Caco-2 (cell line): ENCODE measurements at regions of chr19 and their contacts with region 1.

Region 1: DNA sequence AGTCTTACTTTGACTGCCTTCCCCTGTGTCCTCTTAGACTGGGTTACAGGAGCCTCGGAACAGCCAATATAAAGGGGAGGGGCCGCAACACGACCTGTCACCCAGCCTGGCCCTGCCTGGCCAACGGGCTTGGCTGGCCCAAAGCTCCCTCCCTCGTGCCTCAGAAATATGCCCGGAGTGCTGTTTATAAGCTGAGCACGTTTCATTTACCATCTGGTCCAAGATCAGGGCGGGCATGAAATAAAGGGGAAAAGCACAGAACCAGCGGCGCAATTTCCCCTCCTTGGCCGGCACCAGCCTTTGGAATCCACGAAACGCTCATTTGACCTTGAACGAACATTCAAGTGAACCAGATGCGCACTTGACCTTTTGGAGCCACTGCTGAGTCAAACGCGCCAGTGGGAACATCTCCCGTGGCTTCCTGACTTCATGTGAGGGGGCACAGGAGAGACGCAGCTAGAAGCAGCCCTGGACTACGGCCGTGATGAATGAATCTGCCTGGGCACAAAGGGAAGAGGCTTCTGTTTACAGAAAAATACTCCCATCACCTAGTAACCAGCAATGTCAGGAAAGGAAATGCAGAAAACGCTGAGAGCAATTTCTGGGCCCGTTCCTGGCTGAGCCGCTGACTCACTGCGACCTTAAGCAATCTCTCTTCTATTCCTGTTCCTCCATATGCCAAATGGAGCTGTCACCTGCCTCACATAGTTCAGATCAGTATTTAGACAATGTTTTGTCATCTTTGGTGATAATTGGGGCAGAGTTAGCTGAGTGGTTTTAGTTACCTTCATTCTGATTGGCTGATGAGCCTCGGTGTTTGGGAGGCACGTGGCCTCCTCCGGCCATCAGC is 53.3 kb downstream of the RFX2 start:
- DNase-seq: peak; percentile 42 to 48
- H3K4me3 ChIP-seq: no peak overlapping the region
- H3K4me3 Mint-ChIP-seq: no peak overlapping the region
- H3K27ac Mint-ChIP-seq: peak overlapping the region; percentile 80
- H3K4me1 ChIP-seq: peaks cover 33% of the 10 kb centered on the region
- H3K4me1 Mint-ChIP-seq: peaks cover 31% of the 10 kb centered on the region
- H3K27me3 ChIP-seq: no peaks in the 10 kb centered on the region
- H3K27me3 Mint-ChIP-seq: no peaks in the 10 kb centered on the region
- CTCF ChIP-seq: no peak

Region 2: DNA sequence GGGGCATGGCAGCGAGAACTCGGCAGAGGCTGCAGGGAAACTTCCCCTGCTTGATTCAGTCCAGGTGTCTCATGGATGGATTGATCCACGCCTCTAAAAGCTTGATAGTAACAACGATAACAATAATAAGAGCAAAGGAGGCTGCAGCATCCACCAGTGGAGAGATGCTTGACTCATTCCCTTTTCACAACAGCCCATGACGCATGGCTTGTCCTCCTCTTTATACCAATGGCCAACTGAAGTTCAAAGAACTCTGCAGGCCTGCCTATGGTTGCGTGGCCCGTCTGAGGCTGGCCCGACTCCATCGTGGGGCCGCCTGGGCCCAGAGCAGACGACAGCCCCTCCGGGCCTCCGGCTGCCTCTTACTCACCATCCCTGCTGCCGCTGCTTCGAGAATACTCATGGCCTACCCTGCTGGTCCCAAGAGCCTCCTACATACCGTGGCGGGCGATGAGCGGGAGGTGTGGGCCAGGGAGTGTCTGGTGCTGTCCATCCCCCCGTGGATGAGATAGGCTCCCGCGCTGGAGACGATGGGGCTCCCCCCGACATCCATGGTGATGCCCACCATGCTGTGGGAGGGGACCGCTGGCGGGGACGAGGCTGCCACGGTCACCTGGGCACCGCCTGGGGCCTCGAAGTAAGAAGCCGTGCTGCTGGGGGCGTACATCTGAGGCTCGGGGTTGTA is 17.3 kb before region 1 on chr19:
- CTCF ChIA-PET with region 1: no interaction called
- POLR2A ChIA-PET with region 1: no interaction called
- intact Hi-C with region 1: no loop called
- DNase-seq: no peak
- H3K4me3 ChIP-seq: no peak overlapping the region
- H3K4me3 Mint-ChIP-seq: no peak overlapping the region
- H3K27ac Mint-ChIP-seq: no peak overlapping the region
- H3K4me1 ChIP-seq: no peaks in the 10 kb centered on the region
- H3K4me1 Mint-ChIP-seq: no peaks in the 10 kb centered on the region
- H3K27me3 ChIP-seq: no peaks in the 10 kb centered on the region
- H3K27me3 Mint-ChIP-seq: no peaks in the 10 kb centered on the region
- CTCF ChIP-seq: no peak

Region 3: DNA sequence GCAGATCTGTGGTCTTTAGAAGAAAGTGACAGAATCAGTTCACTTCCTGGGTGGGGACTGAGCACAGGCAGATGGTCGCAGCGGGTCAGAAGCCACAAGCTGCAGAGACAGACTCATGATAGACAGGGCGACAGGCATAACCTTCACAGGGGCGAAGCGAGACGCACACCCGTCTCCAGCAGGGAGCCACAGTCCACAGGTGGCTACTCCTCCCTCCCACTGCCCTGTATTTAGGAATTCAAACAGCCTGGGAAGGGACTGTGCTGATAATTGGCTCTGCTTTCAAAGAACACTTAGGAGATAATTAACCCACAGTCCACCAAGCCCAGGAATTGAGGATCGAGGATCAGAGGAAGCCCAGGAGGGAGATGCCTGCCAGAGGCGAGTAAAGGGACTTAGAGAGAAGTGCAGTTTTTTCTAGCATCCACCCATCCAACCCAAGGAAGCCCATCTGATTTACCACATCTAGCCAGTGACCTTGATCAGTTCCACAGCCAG is 30.1 kb after region 1 on chr19:
- CTCF ChIA-PET with region 1: interaction called, 10 read pairs
- POLR2A ChIA-PET with region 1: interaction called, 4 read pairs
- intact Hi-C with region 1: loop called (anchors 1 kb)
- DNase-seq: peak; percentile 71 to 84
- H3K4me3 ChIP-seq: peak overlapping the region; percentile 27
- H3K4me3 Mint-ChIP-seq: peak overlapping the region; percentile 68
- H3K27ac Mint-ChIP-seq: peak overlapping the region; percentile 93
- H3K4me1 ChIP-seq: peaks cover 33% of the 10 kb centered on the region
- H3K4me1 Mint-ChIP-seq: peaks cover 24% of the 10 kb centered on the region
- H3K27me3 ChIP-seq: no peaks in the 10 kb centered on the region
- H3K27me3 Mint-ChIP-seq: no peaks in the 10 kb centered on the region
- CTCF ChIP-seq: no peak

Region 4: DNA sequence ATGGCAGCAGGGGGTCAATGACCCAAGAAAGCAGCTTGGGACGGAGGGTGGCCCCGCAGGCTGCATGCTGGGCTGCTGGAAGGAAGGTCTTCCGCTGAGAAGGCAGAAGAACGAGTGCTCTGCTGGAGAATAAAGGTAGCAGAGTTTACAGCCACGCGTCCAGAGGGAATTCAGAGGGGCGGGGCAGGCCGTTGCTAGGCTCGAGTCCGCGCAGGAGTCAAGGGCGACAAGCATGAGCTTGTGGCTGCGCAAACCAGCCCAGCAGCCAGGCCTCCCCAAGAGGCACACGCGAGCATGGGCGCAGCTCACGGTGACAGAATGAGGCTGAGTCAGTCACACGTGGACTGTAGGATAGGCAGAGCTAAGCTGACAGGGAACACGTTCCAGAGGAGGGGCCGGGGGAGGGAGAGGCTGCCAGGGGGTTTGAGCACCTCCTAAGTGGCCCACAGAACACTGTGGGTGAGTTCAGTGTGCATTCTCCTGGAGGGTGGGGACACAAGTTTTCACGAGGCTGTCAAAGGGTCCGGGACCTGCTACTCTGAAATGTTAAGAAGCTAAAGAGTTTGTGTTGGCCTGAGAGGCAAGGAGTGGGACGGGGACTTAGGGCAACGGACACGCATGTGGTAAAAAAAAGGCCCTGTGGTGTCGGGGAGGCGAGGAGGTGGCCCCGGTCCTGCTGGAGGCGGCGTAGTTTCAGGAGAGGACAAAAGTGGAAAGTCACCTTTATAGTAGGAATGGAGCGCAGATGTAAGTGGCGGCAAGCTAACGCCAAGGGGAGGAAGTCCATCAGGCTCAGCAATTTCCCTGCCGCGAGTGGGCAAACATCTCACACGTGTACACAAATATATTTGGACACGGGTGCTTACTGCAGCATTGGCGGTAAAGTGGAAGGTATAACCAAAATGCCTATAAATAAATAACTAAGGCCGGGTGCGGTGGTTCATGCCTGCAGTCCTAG is 35.6 kb after region 1 on chr19:
- CTCF ChIA-PET with region 1: interaction called, 10 read pairs
- POLR2A ChIA-PET with region 1: interaction called, 4 read pairs
- intact Hi-C with region 1: loop called (anchors 1 kb)
- DNase-seq: peak; percentile 84 to 90
- H3K4me3 ChIP-seq: peak overlapping the region; percentile 30
- H3K4me3 Mint-ChIP-seq: peak overlapping the region; percentile 70
- H3K27ac Mint-ChIP-seq: peak overlapping the region; percentile 95
- H3K4me1 ChIP-seq: peaks cover 31% of the 10 kb centered on the region
- H3K4me1 Mint-ChIP-seq: peaks cover 26% of the 10 kb centered on the region
- H3K27me3 ChIP-seq: no peaks in the 10 kb centered on the region
- H3K27me3 Mint-ChIP-seq: no peaks in the 10 kb centered on the region
- CTCF ChIP-seq: no peak

Region 5: DNA sequence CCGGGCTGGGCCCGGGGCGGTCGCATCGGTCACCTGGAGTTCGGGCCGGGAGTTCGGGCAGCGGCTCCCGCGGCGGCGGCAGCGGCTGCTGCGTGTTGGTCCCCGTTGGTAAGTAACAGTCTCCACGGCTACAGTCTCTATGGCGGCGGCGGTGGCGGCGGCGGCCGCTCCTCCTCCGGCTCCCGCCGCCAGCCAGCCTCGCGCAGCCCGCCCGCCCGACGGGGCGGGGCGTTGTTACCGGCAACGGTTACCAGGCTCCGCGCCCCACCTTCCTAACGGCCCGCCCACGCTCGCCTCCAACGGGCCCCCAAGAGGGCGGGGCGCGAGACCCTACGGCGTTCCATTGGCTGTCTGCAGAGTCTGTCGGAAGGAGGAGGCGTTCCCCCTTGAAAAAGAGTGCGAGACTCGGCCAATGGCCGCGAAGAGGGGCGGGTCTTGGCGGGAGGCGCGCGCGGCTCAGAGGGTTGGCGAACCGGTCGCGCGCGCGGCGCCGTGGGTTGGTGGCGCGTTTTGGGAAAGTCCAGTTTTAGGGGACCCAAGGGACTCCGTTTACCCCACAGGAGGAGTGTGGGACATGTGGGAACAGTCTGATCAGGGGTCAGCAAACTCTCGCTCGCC is 53.4 kb after region 1 on chr19 and contains the start of gene RFX2:
- CTCF ChIA-PET with region 1: interaction called, 3 read pairs
- POLR2A ChIA-PET with region 1: interaction called, 3 read pairs
- intact Hi-C with region 1: loop called (anchors 5 kb)
- DNase-seq: peak; percentile 98 to 99
- H3K4me3 ChIP-seq: peak within 1 kb of the TSS; percentile 56
- H3K4me3 Mint-ChIP-seq: peak within 1 kb of the TSS; percentile 81
- H3K27ac Mint-ChIP-seq: peak within 1 kb of the TSS; percentile 82
- H3K4me1 ChIP-seq: 0 out of 2 replicates have a peak, but pooled peaks cover 4% of the 10 kb centered on the region
- H3K4me1 Mint-ChIP-seq: peaks cover 24% of the 10 kb centered on the region
- H3K27me3 ChIP-seq: no peaks in the 10 kb centered on the region
- H3K27me3 Mint-ChIP-seq: no peaks in the 10 kb centered on the region
- CTCF ChIP-seq: no peak
- total RNA-seq, gene RFX2: 9.3 and 10.2 TPM in 2 replicates

Region 6: GRCh38 chr19:6150289-6150688 is 93.3 kb after region 1 on chr19:
- CTCF ChIA-PET with region 1: no interaction called
- POLR2A ChIA-PET with region 1: no interaction called
- intact Hi-C with region 1: no loop called
- DNase-seq: no peak
- H3K4me3 ChIP-seq: no peak overlapping the region
- H3K4me3 Mint-ChIP-seq: no peak overlapping the region
- H3K27ac Mint-ChIP-seq: no peak overlapping the region
- H3K4me1 ChIP-seq: no peaks in the 10 kb centered on the region
- H3K4me1 Mint-ChIP-seq: no peaks in the 10 kb centered on the region
- H3K27me3 ChIP-seq: no peaks in the 10 kb centered on the region
- H3K27me3 Mint-ChIP-seq: peaks cover 3% of the 10 kb centered on the region
- CTCF ChIP-seq: no peak

Region 7: DNA sequence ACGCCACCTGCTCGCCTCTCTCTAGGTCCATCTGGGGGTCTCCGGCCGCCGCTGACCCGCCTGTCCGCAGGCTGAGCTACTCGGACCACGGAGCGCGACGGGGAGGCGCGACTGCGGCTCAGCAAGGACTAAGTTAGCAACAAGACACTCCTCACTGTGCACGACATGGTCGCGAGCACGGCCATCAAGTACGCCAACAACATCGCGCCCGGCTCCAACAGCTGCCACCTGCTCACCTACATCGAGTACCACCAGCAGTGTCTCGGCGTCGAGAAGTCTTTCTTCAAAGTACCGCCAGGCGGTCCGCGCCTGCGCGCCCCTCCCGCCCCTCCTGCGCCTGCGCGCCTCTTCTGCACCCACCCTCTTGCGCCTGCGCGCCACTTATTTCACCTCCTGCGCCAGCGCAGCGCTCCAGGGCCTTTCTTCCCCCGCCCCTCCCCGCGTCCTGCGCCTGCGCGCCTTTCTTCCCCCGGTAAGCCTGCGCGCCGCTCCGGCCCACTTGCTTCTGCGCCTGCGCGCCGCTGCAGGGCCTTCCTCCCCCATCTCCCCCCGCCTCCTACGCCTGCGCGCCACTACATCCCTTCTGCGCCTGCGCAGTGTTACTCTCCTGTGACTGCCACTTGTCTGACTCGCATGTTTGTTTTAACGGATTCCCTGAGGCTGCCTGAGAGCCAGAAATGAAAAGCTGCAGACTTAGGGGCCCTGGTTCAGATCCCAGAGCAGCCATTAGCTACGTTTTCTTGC is 142.4 kb after region 1 on chr19:
- CTCF ChIA-PET with region 1: no interaction called
- POLR2A ChIA-PET with region 1: no interaction called
- intact Hi-C with region 1: no loop called
- DNase-seq: peak; percentile 97
- H3K4me3 ChIP-seq: peak overlapping the region; percentile 59
- H3K4me3 Mint-ChIP-seq: peak overlapping the region; percentile 94
- H3K27ac Mint-ChIP-seq: peak overlapping the region; percentile 80
- H3K4me1 ChIP-seq: peaks cover 5% of the 10 kb centered on the region; the same call in 1 of the 2 replicates
- H3K4me1 Mint-ChIP-seq: no peaks in the 10 kb centered on the region
- H3K27me3 ChIP-seq: no peaks in the 10 kb centered on the region
- H3K27me3 Mint-ChIP-seq: no peaks in the 10 kb centered on the region
- CTCF ChIP-seq: peak; percentile 17 to 38